ENCODE measurements at regions of chr13 and their contacts with region 1.

Region 1: DNA sequence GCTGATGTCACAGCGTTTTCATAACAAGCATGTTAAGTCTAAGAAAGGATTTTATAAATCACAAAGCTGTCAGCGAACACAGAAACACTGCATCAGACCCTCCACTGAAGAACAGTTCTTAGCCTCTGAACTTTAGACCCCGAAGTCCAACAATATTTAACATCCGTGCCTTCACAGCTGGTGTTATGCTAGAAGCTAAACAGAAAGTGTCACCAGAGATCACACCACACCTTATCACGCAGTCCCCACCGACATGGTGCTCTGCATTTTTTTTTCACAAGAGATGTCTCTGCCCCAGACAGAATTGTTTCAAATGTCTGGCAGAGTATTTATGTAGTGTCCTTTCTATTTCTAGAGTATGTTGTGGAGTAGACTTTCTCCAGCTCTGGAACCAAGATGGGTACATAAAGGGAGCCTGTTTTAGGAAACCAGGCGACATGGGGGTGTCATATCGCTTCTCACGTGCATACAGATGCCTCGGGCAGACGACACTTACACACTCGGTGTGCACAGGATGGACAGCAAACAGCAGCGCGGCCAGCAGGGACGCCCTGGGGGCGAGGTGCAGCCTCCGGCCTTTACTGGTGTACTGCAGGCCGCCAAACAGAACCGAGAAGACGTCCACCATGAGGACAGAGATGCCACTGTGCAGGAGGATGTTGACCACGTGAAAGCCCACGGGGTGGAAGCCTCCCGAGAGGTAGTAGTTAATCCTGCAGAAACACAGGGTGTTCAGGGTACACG is 12.0 kb downstream of the TMTC4 start:
- DNase-seq: no peak
- H3K4me3 ChIP-seq: no peak overlapping the region
- H3K4me3 Mint-ChIP-seq: no peak overlapping the region
- H3K27ac Mint-ChIP-seq: no peak overlapping the region
- H3K4me1 ChIP-seq: peaks cover 6% of the 10 kb centered on the region; the same call in 1 of the 2 replicates
- H3K4me1 Mint-ChIP-seq: peaks cover 13% of the 10 kb centered on the region
- H3K27me3 ChIP-seq: no peaks in the 10 kb centered on the region
- H3K27me3 Mint-ChIP-seq: no peaks in the 10 kb centered on the region
- CTCF ChIP-seq: no peak

Region 2: DNA sequence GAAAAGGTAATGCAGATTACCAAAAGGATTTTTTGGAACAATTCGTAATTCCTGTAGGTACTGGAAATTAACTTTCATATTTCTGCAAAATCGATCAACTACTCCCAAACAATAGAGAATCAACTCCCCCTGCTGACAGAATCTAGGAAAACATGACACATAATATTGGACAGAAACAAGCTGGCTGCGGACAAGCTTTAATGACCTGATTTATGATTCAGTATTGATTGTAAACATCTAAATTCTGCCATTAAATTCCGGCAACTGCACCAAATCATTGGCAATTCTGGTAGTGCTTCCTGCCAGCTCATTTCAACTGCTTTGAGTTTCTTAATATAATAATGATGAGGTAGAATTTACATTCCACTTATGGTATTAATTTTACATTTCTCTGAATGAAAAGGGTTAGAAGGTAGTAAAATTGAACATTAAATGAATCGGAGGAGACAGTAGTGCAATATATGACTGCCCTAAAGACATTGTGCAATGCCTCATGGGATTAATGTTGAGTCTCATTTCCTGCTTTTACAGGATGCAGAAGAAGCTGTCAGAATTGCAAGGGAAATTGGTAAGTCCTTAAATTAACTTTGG is 427.2 kb before region 1 on chr13:
- CTCF ChIA-PET with region 1: no interaction called
- POLR2A ChIA-PET with region 1: no interaction called
- intact Hi-C with region 1: no loop called
- DNase-seq: peak in 1 of 2 experiments; percentile 69
- H3K4me3 ChIP-seq: no peak overlapping the region
- H3K4me3 Mint-ChIP-seq: no peak overlapping the region
- H3K27ac Mint-ChIP-seq: no peak overlapping the region
- H3K4me1 ChIP-seq: peaks cover 19% of the 10 kb centered on the region
- H3K4me1 Mint-ChIP-seq: peaks cover 10% of the 10 kb centered on the region
- H3K27me3 ChIP-seq: no peaks in the 10 kb centered on the region
- H3K27me3 Mint-ChIP-seq: no peaks in the 10 kb centered on the region
- CTCF ChIP-seq: peak; percentile 67 to 69

Region 3: GRCh38 chr13:100674848-100675660 is 12.4 kb after region 1 on chr13:
- CTCF ChIA-PET with region 1: interaction called, 3 read pairs
- POLR2A ChIA-PET with region 1: no interaction called
- intact Hi-C with region 1: loop called (anchors 1 kb)
- DNase-seq: peak; percentile 100
- H3K4me3 ChIP-seq: peak overlapping the region; percentile 73
- H3K4me3 Mint-ChIP-seq: peak overlapping the region; percentile 96
- H3K27ac Mint-ChIP-seq: peak overlapping the region; percentile 15
- H3K4me1 ChIP-seq: peaks cover 15% of the 10 kb centered on the region
- H3K4me1 Mint-ChIP-seq: peaks cover 17% of the 10 kb centered on the region
- H3K27me3 ChIP-seq: no peaks in the 10 kb centered on the region
- H3K27me3 Mint-ChIP-seq: no peaks in the 10 kb centered on the region
- CTCF ChIP-seq: peak; percentile 42 to 59

Region 4: GRCh38 chr13:100828226-100828625 is 165.6 kb after region 1 on chr13:
- CTCF ChIA-PET with region 1: no interaction called
- POLR2A ChIA-PET with region 1: no interaction called
- intact Hi-C with region 1: loop called (anchors 5 kb)
- DNase-seq: peak; percentile 23 to 41
- H3K4me3 ChIP-seq: no peak overlapping the region
- H3K4me3 Mint-ChIP-seq: no peak overlapping the region
- H3K27ac Mint-ChIP-seq: no peak overlapping the region
- H3K4me1 ChIP-seq: no peaks in the 10 kb centered on the region
- H3K4me1 Mint-ChIP-seq: peaks cover 7% of the 10 kb centered on the region
- H3K27me3 ChIP-seq: no peaks in the 10 kb centered on the region
- H3K27me3 Mint-ChIP-seq: no peaks in the 10 kb centered on the region
- CTCF ChIP-seq: peak; percentile 30 to 57

Measured in Caco-2 (cell line).